ENCODE measurements at regions of chr2 and their contacts with region 1.

Region 1: GRCh38 chr2:85584857-85585783 is 889 bp downstream of the VAMP5 start:
- DNase-seq: peak; percentile 45 to 61
- ATAC-seq: peak; percentile 88 to 92 (median 90)
- H3K4me3 ChIP-seq: peak overlapping the region; percentile 81
- H3K27ac ChIP-seq: peak overlapping the region; percentile 89
- H3K4me1 ChIP-seq: peaks cover 54% of the 10 kb centered on the region
- H3K27me3 ChIP-seq: no peaks in the 10 kb centered on the region
- CTCF ChIP-seq: no peak

Region 2: DNA sequence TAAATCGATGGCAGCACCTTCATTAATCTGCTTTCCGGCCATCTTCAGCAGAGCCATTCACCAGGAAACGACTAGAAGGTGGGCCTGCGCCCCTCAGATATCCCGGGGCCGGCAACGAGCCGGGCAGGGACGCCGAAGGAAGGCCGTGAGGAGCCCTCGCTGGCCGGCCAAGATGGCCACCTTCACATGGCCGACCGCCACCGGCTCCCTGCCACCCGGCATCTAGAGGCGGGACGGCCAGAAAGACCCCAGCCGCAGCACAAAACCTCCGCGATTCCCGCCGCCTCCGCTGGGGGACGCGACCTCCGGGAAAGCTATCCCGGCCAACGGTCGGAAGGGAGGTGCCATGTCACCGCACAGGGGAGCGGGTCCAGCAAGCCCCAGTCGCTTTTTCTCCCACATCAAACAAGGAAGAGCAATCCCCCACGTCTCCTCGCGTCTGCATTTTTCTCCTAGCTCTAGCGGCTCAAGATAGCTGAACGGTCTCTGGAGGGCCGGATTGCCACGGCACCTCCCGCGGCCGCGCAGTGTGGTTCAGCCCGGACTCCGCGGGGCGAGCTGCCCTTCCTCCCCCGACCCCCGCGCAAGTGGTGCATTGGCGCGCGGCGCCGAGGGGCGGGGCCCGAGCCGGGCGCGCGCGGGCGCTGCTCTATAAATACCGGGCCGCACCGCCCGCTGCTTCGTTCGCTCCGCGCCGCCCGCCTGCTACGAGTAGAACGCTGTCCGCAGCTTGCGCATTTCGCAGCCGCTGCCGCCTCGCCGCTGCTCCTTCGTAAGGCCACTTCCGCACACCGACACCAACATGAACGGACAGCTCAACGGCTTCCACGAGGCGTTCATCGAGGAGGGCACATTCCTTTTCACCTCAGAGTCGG is 46.4 kb before region 1 on chr2 and contains the start of gene MAT2A:
- intact Hi-C with region 1: loop called in 1 of 2 experiments (anchors 1 kb)
- DNase-seq: peak; percentile 97 to 98
- ATAC-seq: peak; percentile 82 to 88 (median 84)
- H3K4me3 ChIP-seq: peak within 1 kb of the TSS; percentile 89
- H3K27ac ChIP-seq: peak within 1 kb of the TSS; percentile 99
- H3K4me1 ChIP-seq: peaks cover 44% of the 10 kb centered on the region
- H3K27me3 ChIP-seq: no peaks in the 10 kb centered on the region
- CTCF ChIP-seq: peak; percentile 71
- total RNA-seq, gene MAT2A: 127 to 356 (median 183) TPM